GM10248 (cell line): ENCODE measurements at regions of chr12 and their contacts with region 1.

Region 1: GRCh38 chr12:53543539-53543938 is 36.3 kb upstream of the NPFF start:
- DNase-seq: peak; percentile 78
- CTCF ChIP-seq: peak; percentile 75

Region 2: DNA sequence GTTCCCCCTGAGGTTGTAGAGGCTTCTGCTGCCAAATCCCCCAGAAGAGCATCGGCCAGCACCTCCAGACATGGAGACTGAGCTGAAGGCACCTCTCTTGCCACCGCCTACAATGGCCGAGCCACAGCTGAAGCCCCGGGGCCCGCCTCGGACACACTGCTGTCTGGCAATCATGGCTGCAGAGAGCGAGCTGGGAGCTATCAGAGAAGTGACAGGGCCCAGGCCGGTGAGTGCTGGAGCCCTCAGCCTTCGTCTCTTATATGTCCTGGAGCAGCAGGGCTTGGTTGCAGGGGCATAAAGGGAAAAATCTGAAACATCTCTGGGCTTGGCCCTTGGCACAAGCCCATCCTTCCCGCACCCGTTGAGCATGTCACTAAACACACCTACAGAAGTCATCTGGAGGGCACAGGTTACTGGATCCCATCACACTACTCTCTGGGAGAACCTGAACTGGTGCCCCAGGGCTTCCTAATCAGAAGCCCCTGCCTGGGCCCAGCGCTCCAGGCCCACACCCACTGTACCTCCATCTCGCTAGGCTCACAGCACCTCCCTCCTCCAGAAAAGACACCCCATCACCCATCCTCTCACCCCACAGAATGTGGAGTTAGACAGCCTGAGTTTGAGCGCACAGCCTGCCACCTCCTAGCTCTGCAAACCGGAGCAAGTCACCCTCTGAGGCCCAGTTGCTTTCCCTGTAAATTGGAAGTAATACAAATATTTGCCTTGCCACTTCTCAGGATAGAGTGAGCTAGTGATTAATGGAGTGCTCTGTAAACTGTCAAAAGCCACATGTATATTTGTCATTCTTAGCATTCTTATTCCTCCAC is 729.4 kb before region 1 on chr12 and contains the start of gene KRT4:
- CTCF ChIA-PET with region 1: no interaction called
- POLR2A ChIA-PET with region 1: no interaction called
- DNase-seq: no peak
- CTCF ChIP-seq: no peak

Region 3: GRCh38 chr12:53561590-53561953 is 18.0 kb after region 1 on chr12:
- CTCF ChIA-PET with region 1: interaction called, 39 read pairs
- POLR2A ChIA-PET with region 1: interaction called, 3 read pairs
- DNase-seq: no peak
- CTCF ChIP-seq: no peak

Region 4: GRCh38 chr12:53585448-53586125 is 42.0 kb after region 1 on chr12:
- CTCF ChIA-PET with region 1: interaction called, 45 read pairs
- POLR2A ChIA-PET with region 1: no interaction called
- DNase-seq: peak; percentile 42
- CTCF ChIP-seq: no peak

Region 5: DNA sequence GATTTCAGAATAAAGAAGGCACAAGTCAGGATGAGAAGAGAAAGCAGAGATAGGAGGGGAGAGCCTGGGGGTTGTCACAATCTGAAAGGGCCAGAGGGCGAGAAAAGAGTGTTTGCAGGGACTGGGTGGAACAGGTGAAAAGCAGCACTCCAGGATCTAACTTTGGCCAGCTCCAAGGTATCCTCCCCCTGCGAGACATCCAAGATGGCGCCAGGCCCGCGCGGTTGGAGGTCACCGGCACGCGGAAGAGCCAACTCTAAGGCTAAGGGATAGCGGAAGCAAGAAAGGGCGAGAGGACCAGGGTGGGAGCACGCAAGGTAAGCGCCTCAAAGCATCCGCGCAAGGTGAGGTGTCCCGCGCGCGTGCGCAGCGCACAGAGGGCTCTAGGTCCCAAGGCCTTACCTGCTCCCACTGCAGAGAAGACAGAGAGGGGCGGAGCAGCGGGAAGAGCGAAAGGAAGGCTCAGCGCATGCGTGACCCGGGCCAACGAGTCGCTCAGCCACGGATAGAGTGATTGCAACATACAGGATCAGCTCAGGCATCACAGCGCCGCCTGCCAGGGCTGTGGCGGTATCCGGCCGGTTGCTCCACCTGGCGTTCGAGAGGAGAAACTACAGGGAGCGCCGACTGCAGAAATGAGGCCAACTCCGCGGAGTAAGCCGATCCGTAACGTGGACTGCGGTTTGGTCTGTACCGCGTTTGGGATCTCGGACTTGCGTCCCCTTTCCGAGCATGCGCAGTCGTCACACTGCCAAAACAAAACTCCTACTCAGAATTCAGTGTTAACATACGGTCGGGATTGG is 132.3 kb after region 1 on chr12 and contains the start of gene ATP5MC2:
- CTCF ChIA-PET with region 1: interaction called, 213 read pairs
- POLR2A ChIA-PET with region 1: interaction called, 6 read pairs
- DNase-seq: peak; percentile 99
- CTCF ChIP-seq: peak; percentile 99

Region 6: DNA sequence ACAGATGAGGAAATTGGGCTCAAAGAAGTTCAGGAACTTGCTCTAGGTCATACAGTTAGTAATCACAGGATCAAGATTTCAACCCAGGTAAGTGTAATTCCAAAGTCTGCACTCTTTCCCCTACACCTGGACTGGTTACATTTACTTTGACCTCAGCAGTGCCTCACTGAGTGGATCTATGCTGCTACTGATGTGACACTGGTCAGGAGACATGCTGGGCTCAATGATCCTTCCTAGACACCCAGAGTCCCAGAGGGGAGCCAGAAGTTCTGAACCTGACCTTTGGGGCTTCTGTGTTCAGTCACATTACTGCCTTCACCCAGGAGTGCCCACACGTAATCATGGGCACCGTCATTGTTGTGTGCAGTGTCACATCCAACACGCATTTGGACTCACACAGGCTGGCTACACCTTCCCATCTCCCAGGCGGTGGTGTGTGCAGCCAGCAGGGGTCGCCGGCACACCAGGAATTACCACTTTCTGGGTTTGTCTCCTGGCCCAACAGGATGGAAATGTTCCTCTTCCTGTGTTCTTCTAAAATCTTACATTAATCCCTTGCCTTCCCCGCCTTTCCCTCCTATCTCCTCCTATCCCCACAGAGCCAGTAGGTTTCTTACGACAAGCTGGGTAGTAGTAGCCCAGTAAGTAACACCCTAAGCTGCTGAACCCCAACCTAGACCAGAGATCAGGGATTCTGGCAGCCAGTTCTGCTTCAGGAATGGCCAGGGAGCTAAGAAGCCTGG is 158.2 kb after region 1 on chr12:
- CTCF ChIA-PET with region 1: interaction called, 10 read pairs
- POLR2A ChIA-PET with region 1: no interaction called
- DNase-seq: peak; percentile 80
- CTCF ChIP-seq: peak; percentile 99